ENCODE measurements at regions of chr3 and their contacts with region 1.

Region 1: GRCh38 chr3:32374788-32375595 is 16.7 kb upstream of the CMTM7 start:
- DNase-seq: peak; percentile 78
- H3K4me3 ChIP-seq: no peak overlapping the region
- H3K27ac ChIP-seq: no peak overlapping the region
- H3K4me1 ChIP-seq: no peaks in the 10 kb centered on the region
- H3K27me3 ChIP-seq: peaks cover 11% of the 10 kb centered on the region
- CTCF ChIP-seq: peak; percentile 78

Region 2: DNA sequence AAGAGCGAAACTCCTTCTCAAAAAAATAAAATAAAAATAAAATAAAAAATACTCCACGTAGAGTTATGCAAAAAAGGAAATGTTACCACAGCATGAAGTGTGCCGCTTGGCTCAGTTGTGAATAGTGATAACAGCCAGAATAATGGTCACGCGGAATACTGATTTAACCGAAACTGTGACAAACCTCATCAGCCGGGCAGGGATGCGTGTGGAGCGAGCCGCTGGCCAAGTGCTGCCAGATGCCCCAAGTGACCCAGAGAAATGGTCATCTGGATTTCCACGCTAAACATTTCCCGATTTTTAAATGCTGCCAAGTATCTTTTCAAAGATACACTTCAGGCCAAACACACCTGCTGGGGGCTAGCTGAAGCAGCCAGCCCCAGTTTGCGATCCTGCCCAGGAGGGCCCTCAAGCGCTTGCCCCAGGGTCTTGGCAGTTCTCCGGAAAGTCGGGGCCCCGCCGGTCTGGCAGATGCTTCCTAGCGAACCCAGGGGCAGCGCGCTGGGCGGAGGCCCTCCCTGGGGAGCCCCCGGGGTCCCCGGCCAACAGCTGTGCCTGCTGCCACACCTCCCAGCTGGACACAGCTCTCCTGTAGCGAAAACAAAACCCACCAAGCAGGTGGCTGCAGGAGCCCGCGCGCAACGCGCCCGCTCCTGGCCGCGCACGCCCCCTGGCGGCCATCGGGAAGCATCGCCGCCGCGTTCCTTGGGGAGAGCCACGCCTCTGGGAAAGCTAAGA is 92.5 kb after region 1 on chr3:
- CTCF ChIA-PET with region 1: interaction called, 19 read pairs
- POLR2A ChIA-PET with region 1: no interaction called
- intact Hi-C with region 1: loop called (anchors 2 kb)
- DNase-seq: peak; percentile 73
- H3K4me3 ChIP-seq: peak overlapping the region; percentile 35
- H3K27ac ChIP-seq: no peak overlapping the region
- H3K4me1 ChIP-seq: no peaks in the 10 kb centered on the region
- H3K27me3 ChIP-seq: no peaks in the 10 kb centered on the region
- CTCF ChIP-seq: peak; percentile 98

Measured in A673 (cell line).